Cardiac septum (tissue), 1 donor: ENCODE measurements at regions of chr12 and their contacts with region 1.

Region 1: DNA sequence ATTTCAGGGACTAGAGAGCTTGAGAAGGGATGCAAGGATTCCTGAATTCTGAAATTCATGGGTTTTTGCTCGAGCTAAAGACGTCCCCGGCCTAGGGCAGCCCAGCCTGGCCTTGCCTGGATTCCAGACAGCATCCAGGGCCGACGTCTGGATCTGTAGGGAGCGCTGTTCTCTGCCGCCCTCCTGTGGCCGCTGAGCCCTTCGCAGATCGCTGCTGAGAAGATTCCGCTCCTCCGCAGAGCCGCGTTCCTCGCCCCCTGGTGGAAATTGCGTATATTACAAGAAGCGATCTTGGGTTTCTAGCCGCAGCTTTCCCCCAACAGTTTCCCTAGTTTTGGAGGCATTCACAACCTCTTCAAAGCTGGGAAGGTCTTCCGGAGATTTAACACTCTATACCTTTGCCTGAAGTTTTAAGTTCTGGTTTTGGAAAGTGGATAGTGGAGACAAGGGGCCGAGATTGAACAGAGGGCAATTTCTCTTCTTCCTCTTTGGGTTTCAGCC is 5.1 kb downstream of the CISTR start:
- DNase-seq: peak; percentile 97

Region 2: GRCh38 chr12:53701518-53702260 is 45.0 kb before region 1 on chr12:
- intact Hi-C with region 1: loop called (anchors 1 kb)
- DNase-seq: peak; percentile 83